Dendritic cell treated with granulocyte-macrophage colony-stimulating factor and Interleukin-4, amounts not matched to agents 40 ng/mL and 50 ng/mL, for 4 days (primary cell): ENCODE measurements at regions of chr15 and their contacts with region 1.

Region 1: DNA sequence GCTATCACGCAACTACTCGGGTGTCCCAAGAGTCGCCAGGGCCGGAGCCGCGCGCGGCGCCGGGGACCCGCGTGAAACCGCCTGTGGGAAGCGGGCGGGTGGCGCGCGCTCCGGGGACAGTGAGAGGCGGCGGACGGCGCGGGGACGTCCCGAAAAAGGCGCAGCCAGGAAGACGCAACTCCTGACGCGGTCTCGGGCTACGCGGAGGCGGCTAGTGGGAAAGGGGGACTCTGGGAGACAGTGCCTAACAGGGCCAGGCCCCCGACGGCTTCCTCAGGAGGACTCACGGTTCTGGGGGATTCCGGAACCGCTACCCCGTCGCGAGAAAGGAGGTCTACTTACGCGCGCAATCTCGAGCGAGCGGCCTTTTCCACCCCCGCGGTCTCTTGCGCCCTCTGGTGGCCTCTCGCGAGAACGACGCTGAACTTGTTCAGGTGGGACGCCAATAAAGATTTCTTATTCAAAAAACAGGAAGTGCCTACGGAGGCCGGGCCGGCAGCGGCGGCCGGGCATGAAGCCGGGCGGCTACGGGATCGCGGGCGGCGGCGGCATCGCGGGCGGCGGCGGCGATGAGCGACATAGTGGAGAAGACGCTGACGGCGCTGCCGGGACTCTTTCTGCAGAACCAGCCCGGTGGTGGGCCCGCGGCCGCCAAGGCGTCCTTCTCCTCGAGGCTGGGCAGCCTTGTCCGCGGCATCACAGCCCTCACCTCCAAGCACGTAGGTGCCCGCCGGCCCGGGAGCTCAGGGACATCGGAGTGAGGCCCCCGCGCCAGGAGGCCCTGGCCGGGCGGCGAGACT is at the start of gene AP4E1:
- H3K4me3 Mint-ChIP-seq: peak within 1 kb of the TSS; percentile 92
- H3K27ac Mint-ChIP-seq: peak within 1 kb of the TSS; percentile 97
- H3K4me1 Mint-ChIP-seq: peaks cover 20% of the 10 kb centered on the region
- H3K27me3 Mint-ChIP-seq: no peaks in the 10 kb centered on the region

Region 2: DNA sequence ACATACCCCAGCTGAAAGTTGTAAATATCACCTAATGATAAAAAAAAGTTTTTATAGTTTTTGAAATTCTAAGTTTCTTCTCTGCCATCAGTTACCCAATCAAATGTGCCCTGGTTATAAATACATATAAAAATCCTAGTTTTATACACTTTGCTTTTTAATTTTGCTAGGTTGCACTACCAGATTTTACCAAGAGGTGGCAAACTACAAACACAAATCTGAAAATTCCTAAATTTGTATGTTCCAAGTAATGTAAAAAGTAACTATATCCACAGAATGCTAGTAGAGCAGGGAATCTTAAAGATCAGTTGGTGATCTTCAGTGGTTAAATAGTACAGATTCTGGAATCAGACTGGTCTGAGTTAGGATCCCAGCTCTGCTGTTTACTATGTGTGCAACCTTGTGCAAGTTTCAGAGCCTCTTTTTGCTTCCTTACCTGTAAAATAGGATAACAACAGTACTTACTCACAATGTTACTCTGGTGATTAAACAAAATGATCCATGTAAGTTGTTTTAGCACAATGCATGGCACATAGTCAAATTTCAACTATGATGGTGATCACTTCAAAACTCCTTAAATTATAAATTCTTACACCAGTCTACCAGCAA is 232.8 kb before region 1 on chr15:
- intact Hi-C with region 1: loop called (anchors 2 kb)
- H3K4me3 Mint-ChIP-seq: no peak overlapping the region
- H3K27ac Mint-ChIP-seq: no peak overlapping the region
- H3K4me1 Mint-ChIP-seq: peaks cover 12% of the 10 kb centered on the region
- H3K27me3 Mint-ChIP-seq: no peaks in the 10 kb centered on the region

Region 3: DNA sequence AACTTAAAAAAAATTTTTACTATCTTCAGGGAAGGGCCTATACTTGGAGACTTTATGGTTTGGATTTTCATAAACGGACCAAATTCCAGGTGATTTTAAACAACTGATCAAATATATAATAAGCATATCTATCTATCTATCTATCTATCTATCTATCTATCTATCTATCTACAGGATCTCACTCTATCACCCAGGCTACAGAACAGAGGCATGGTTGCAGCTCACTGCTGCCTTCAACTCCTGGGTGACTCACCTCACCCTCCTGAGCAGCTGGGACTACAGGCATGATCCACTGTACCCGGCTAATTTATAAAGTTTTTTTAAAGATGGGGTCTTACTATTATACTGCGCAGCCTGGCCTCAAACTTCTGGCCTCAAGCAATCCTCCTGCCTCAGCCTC is 149.6 kb before region 1 on chr15:
- intact Hi-C with region 1: loop called (anchors 5 kb)
- H3K4me3 Mint-ChIP-seq: no peak overlapping the region
- H3K27ac Mint-ChIP-seq: no peak overlapping the region
- H3K4me1 Mint-ChIP-seq: peaks cover 56% of the 10 kb centered on the region
- H3K27me3 Mint-ChIP-seq: no peaks in the 10 kb centered on the region

Region 4: GRCh38 chr15:50933341-50933740 is 24.9 kb after region 1 on chr15:
- intact Hi-C with region 1: no loop called
- H3K4me3 Mint-ChIP-seq: no peak overlapping the region
- H3K27ac Mint-ChIP-seq: no peak overlapping the region
- H3K4me1 Mint-ChIP-seq: peaks cover 6% of the 10 kb centered on the region
- H3K27me3 Mint-ChIP-seq: no peaks in the 10 kb centered on the region